Heart left ventricle (tissue), 16 donors: ENCODE measurements at regions of chr2 and their contacts with region 1.

Region 1: DNA sequence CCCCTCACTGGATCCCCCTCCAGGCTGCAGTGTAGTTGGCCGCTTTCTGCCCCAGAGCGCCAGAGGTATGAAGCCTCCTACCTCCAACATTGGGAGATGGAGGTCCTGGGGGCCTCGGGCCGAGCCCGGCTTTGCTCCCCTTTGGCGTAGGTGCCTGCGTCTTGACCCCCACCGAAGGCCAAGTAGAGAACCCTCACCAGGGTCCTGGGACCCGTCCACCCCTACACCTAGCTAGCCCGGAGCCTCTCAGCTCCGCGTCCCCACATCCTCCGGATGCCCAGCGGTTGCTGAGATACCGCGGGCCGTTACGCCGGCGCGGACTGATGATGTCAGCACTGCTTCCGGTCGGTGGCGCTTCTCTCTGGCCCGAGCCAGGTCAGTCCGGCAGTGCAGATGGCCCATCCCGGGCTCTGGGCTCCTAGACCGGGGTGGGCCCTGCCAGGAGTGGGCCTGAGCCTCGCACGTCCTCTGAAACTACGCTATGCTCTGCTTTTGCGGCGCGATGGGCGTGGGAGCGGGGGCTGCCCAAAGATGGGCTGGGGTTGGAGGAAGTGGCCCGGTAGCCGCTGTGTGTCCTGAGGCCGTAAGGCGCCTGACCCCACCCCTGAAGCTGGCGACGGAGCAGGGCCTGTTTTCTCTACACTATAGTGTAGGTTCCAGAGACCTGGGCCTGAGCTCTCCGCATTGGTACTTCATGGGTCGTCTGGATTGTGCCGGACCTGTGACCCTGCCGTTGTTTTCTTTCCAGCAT is at the starts of genes GLB1L and STK16:
- DNase-seq: peak; percentile 94 to 97 (median 95)
- ATAC-seq: peak; percentile 85 to 95 (median 95)
- H3K4me3 ChIP-seq: peak within 1 kb of the TSS; percentile 67 to 95 (median 84)
- H3K27ac ChIP-seq: peak within 1 kb of the TSS; percentile 77 to 98 (median 93)
- H3K4me1 ChIP-seq: peaks cover 6 to 54% (median 33%) of the 10 kb centered on the region in 12 donors
- H3K27me3 ChIP-seq: no peaks in the 10 kb centered on the region
- CTCF ChIP-seq: no peak
- POLR2A ChIP-seq: peak in 1 of 2 donors; percentile 80
- total RNA-seq, gene GLB1L: 1.6 to 7.9 (median 2.5) TPM
- total RNA-seq, gene STK16: 13.8 to 26.9 (median 19.1) TPM

Region 2: GRCh38 chr2:219229305-219230058 is 15.8 kb before region 1 on chr2 and contains the starts of genes ANKZF1 and ATG9A:
- intact Hi-C with region 1: loop called in 1 of 10 experiments (anchors 1 kb)
- DNase-seq: peak; percentile 98 to 100 (median 99)
- ATAC-seq: peak; percentile 99
- H3K4me3 ChIP-seq: peak within 1 kb of the TSS; percentile 80 to 92 (median 88)
- H3K27ac ChIP-seq: peak within 1 kb of the TSS; percentile 93 to 99 (median 97)
- H3K4me1 ChIP-seq: peaks cover 3 to 51% (median 26%) of the 10 kb centered on the region in 12 donors
- H3K27me3 ChIP-seq: no peaks in the 10 kb centered on the region
- CTCF ChIP-seq: no peak
- POLR2A ChIP-seq: peak in 1 of 2 donors; percentile 85
- total RNA-seq, gene ANKZF1: 14.0 to 36.8 (median 28.0) TPM
- total RNA-seq, gene ATG9A: 62.8 to 147 (median 83.5) TPM

Region 3: GRCh38 chr2:219446081-219446521 is 200.8 kb after region 1 on chr2:
- intact Hi-C with region 1: no loop called
- DNase-seq: peak in 1 of 5 donors; percentile 75
- ATAC-seq: peak; percentile 63 to 76 (median 74)
- H3K4me3 ChIP-seq: no peak overlapping the region
- H3K27ac ChIP-seq: peak overlapping the region in 8 of 12 donors; percentile 21 to 96 (median 64)
- H3K4me1 ChIP-seq: peaks cover 0 to 69% (median 14%) of the 10 kb centered on the region in 12 donors
- H3K27me3 ChIP-seq: peaks cover 0 to 47% (median 8%) of the 10 kb centered on the region in 9 donors
- CTCF ChIP-seq: no peak
- POLR2A ChIP-seq: no peak